Sigmoid colon (tissue), 7 donors: ENCODE measurements at regions of chr17 and their contacts with region 1.

Region 1: DNA sequence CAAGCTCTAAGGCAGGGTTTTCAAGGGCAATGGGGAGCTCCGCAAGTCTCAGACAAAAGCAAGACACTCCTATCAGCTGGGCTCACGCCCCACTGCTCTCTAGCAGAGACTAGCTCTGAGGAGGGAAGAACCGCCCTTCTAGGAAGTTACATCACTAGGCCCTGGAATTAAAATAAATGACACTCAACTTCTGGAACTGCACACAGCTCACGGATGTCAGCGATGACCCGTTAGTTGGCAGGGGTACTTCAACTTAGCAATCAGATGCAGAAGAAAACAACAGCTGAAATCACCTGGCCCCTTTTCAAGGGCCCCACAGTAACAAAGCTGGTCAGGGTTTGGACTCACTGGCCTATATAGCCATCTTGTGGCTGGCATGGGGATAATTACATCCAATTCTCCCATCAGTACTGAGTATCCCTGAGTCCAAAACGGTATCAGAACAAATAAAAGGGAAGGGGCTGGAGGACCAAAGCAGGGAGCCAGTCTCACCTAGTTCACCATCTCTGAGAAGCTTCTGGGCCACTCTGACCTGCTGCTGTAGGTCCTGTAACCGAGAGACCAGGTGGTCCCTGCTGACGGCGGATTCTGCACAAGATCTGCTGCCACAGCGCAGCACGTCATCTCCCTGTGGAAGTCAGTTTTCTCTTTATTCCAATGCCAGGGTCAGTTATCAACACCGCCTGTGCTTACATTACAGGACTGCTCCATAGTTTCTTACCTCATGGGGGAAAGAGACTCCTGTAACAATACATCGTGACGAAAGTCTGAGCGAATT is 22.2 kb downstream of the SERPINF1 start:
- DNase-seq: peak; percentile 95
- H3K4me3 ChIP-seq: peak overlapping the region in 2 of 4 donors; percentile 3 to 19
- H3K27ac ChIP-seq: peak overlapping the region; percentile 87 to 94 (median 91)
- H3K4me1 ChIP-seq: peaks cover 0 to 82% (median 76%) of the 10 kb centered on the region in 4 donors
- H3K27me3 ChIP-seq: no peaks in the 10 kb centered on the region
- CTCF ChIP-seq: peak; percentile 65 to 90 (median 85)
- EP300 ChIP-seq: peak in 2 of 4 donors; percentile 63 to 75
- POLR2A ChIP-seq: peak in 1 of 2 donors; percentile 54

Region 2: DNA sequence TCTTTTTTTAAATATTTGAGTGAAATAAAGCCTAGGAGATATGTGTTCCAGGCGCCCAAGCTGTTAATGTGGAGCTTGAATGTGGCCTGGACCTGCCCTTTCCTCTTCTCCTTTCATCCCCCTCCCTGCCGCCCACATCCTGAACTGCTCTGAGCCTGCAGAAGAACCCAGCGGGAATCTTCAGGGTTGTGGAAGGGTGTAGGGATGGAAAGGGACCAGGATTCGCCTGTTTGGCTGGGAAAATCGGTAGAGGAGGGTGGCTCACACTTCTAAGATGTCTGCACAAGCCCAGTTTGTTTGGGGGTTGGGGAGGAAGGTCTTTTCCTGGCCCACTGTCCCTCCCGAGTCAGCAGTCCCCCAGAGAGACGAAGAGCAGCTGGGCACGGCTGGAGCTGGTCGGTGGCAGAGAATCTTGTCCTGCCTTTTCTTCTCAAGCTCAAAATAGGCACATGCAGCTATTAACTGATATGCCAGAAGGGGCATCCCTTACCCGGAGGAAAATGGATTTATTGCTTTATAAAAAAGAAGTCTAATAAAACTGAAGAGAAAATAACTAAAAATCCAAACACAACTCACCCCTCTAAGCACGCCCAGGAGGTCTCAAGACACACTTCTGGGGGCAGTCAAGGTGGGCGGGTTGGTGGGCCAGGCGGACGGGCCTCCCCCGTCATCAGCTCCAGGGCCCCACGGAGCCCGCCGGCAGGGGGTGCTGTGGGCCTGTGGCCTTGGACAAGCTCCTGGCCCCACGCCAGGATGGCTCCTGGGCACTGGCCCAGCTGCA is 209.9 kb before region 1 on chr17:
- intact Hi-C with region 1: loop called (anchors 10 kb)
- DNase-seq: peak; percentile 94
- H3K4me3 ChIP-seq: no peak overlapping the region
- H3K27ac ChIP-seq: peak overlapping the region; percentile 36 to 92 (median 76)
- H3K4me1 ChIP-seq: peaks cover 0 to 42% (median 37%) of the 10 kb centered on the region in 4 donors
- H3K27me3 ChIP-seq: no peaks in the 10 kb centered on the region
- CTCF ChIP-seq: peak; percentile 95 to 97 (median 96)
- EP300 ChIP-seq: no peak
- POLR2A ChIP-seq: no peak

Region 3: DNA sequence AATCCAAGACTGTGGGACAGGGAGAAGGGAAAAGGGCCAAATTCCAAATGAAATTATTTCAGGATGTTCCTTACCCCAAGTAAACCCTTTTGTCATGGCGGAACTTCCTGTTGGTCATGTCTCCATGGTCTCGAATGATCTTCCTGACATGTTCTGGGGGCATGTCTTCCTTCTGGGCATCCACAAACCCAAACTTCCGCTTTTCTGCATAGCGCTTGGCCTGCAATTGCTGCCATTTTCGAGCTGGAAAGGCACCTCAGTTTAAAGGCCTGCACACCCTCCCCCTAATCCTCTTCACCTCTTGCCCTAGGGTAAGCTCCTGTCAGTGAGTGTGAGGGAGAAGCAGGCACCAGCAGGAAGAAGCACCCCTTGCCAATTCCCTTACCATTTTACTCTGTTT is 100.6 kb before region 1 on chr17:
- intact Hi-C with region 1: no loop called
- DNase-seq: no peak
- H3K4me3 ChIP-seq: peak overlapping the region; percentile 82 to 97 (median 90)
- H3K27ac ChIP-seq: peak overlapping the region; percentile 91 to 98 (median 96)
- H3K4me1 ChIP-seq: peaks cover 0 to 28% (median 26%) of the 10 kb centered on the region in 4 donors
- H3K27me3 ChIP-seq: no peaks in the 10 kb centered on the region
- CTCF ChIP-seq: no peak
- EP300 ChIP-seq: no peak
- POLR2A ChIP-seq: no peak

Region 4: GRCh38 chr17:1716076-1716995 is 67.7 kb before region 1 on chr17:
- intact Hi-C with region 1: loop called (anchors 2 kb)
- DNase-seq: peak; percentile 100
- H3K4me3 ChIP-seq: peak overlapping the region; percentile 73 to 99 (median 90)
- H3K27ac ChIP-seq: peak overlapping the region; percentile 99 to 100 (median 100)
- H3K4me1 ChIP-seq: peaks cover 0 to 49% (median 39%) of the 10 kb centered on the region in 4 donors
- H3K27me3 ChIP-seq: no peaks in the 10 kb centered on the region
- CTCF ChIP-seq: no peak
- EP300 ChIP-seq: peak in 1 of 4 donors; percentile 94
- POLR2A ChIP-seq: peak; percentile 100

Region 5: DNA sequence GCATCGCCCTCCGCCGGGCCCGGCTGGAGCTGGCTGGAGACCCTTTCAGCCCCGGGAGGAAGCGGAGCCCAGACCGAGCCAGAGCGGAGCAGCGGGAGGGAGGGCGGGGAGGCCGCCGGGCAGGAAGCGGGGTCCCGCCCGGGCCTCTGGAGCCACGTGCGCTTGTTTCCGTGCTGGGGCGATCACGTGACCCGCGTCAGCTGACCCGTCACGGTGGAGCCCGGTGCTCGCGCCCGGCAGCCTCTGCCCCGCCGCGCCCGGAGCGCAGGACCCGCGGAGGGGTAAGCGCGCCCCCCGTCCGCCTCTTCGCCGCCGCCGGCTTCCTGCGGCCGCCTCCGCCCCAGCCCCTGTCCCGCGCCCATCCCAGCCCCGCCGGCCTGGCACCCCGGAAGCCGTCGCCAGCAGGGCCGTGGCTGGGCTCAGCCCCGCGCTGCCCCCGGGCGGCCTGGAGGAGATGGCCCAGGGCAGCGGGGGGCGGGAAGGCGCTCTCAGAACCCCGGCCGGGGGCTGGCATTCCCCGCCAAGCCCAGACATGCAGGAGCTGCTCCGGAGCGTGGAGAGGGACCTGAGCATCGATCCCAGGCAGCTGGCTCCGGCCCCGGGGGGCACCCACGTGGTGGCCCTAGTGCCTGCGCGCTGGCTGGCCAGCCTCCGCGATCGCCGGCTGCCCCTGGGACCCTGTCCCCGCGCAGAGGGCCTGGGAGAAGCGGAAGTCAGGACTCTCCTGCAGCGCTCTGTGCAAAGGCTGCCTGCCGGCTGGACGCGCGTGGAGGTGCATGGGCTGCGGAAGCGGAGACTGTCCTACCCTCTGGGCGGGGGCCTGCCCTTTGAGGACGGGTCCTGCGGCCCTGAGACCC is 59.3 kb before region 1 on chr17 and contains the start of gene WDR81:
- intact Hi-C with region 1: loop called (anchors 2 kb)
- DNase-seq: peak; percentile 96
- H3K4me3 ChIP-seq: peak within 1 kb of the TSS; percentile 50 to 87 (median 77)
- H3K27ac ChIP-seq: peak within 1 kb of the TSS; percentile 83 to 95 (median 90)
- H3K4me1 ChIP-seq: peaks cover 0 to 61% (median 41%) of the 10 kb centered on the region in 4 donors
- H3K27me3 ChIP-seq: no peaks in the 10 kb centered on the region
- CTCF ChIP-seq: no peak
- EP300 ChIP-seq: peak in 1 of 4 donors; percentile 52
- POLR2A ChIP-seq: no peak
- total RNA-seq, gene WDR81: 21.8 to 49.3 (median 28.2) TPM

Region 6: DNA sequence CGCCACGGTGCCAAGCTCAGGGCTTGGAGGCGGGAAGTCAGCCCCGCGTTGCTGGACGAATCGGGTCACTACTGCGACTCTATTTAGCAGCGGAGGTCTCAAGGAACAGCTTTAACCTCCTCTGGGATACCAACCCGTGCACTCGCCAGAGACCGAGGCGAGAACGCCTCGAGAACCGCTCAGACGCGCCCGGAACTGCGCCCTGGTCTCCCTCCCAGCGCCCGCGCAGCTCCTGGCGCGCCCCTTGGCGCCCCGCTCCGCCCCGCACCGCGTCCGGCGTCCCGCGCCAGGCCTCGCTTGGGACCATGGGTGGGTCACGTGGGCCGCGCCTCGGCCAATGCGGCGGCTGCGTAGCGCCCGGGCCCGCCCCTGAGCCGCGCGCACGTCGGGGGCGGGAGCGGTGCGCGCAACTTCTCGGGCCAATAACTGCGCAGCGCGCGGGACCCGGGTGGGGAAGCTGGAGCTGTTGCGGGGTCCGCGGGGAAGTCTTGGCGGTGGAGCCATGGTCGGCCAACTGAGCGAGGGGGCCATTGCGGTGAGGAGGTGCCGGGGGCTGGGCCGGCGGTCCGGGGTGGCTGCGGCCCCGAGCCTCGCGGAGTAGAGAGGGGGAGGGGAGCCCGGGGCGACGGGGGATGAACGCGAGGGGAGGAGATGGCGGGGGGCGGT is 45.7 kb after region 1 on chr17 and contains the starts of genes RPA1 and SMYD4:
- intact Hi-C with region 1: loop called (anchors 5 kb)
- DNase-seq: peak; percentile 94
- H3K4me3 ChIP-seq: peak within 1 kb of the TSS; percentile 68 to 97 (median 88)
- H3K27ac ChIP-seq: peak within 1 kb of the TSS; percentile 87 to 93 (median 91)
- H3K4me1 ChIP-seq: peaks cover 0 to 30% (median 20%) of the 10 kb centered on the region in 4 donors
- H3K27me3 ChIP-seq: no peaks in the 10 kb centered on the region
- CTCF ChIP-seq: no peak
- EP300 ChIP-seq: no peak
- POLR2A ChIP-seq: peak in 1 of 2 donors; percentile 32
- total RNA-seq, gene RPA1: 27.8 to 46.8 (median 31.1) TPM
- total RNA-seq, gene SMYD4: 14.3 to 19.1 (median 17.1) TPM